Heart left ventricle (tissue), 16 donors: ENCODE measurements at regions of chr12 and their contacts with region 1.

Region 1: DNA sequence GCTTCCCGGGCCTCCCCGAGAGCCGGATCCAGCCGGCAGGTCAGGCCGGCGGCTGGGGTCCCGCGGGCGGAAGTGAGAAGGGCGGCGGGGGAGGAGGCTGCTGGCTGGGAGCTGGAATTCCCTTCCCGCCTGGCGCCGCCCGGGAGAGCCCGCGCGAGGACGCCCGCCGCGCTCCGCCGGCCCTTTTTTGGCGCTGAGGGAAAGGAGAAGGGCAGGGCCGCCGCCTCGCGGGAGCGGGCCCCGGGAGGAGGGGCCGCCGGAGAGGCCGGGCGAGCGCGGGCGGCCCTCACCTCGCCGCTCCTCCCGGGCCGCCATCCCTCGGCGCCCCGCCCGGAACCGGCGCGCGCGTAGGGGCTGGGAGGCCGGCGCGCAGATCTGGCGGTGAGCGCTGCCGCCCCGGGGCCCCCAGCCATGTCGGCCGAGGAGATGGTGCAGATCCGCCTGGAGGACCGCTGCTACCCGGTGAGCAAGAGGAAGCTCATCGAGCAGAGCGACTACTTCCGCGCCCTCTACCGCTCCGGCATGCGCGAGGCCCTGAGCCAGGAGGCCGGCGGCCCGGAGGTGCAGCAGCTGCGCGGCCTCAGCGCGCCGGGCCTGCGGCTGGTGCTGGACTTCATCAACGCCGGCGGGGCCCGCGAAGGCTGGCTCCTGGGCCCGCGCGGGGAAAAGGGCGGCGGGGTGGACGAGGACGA is at the starts of genes KLHL42 and MANSC4:
- DNase-seq: peak; percentile 79 to 89 (median 84)
- ATAC-seq: peak; percentile 70 to 96 (median 91)
- H3K4me3 ChIP-seq: peak within 1 kb of the TSS; percentile 72 to 94 (median 84)
- H3K27ac ChIP-seq: peak within 1 kb of the TSS; percentile 75 to 93 (median 88)
- H3K4me1 ChIP-seq: peaks cover 0 to 35% (median 21%) of the 10 kb centered on the region in 12 donors
- H3K27me3 ChIP-seq: no peaks in the 10 kb centered on the region
- CTCF ChIP-seq: peak in 3 of 12 donors; percentile 8 to 21 (median 21)
- POLR2A ChIP-seq: peak in 1 of 2 donors; percentile 30
- total RNA-seq, gene KLHL42: 5.0 to 11.4 (median 6.5) TPM
- total RNA-seq, gene MANSC4: not detected

Region 2: GRCh38 chr12:27710592-27711316 is 69.3 kb before region 1 on chr12 and contains the start of gene MRPS35:
- intact Hi-C with region 1: loop called in 1 of 10 experiments (anchors 5 kb)
- DNase-seq: peak; percentile 94 to 96 (median 94)
- ATAC-seq: peak; percentile 98 to 99 (median 98)
- H3K4me3 ChIP-seq: peak within 1 kb of the TSS; percentile 56 to 99 (median 84)
- H3K27ac ChIP-seq: peak within 1 kb of the TSS; percentile 6 to 92 (median 82)
- H3K4me1 ChIP-seq: peaks cover 0 to 27% (median 15%) of the 10 kb centered on the region in 12 donors
- H3K27me3 ChIP-seq: no peaks in the 10 kb centered on the region
- CTCF ChIP-seq: peak in 1 of 12 donors; percentile 2
- POLR2A ChIP-seq: peak in 1 of 2 donors; percentile 68
- total RNA-seq, gene MRPS35: 45.7 to 94.1 (median 59.6) TPM

Region 3: GRCh38 chr12:27723212-27723611 is 56.9 kb before region 1 on chr12:
- intact Hi-C with region 1: loop called in 1 of 10 experiments (anchors 10 kb)
- DNase-seq: no peak
- ATAC-seq: no peak
- H3K4me3 ChIP-seq: no peak overlapping the region
- H3K27ac ChIP-seq: no peak overlapping the region
- H3K4me1 ChIP-seq: no peaks in the 10 kb centered on the region
- H3K27me3 ChIP-seq: no peaks in the 10 kb centered on the region
- CTCF ChIP-seq: no peak
- POLR2A ChIP-seq: no peak

Region 4: GRCh38 chr12:27797301-27798025 is 17.4 kb after region 1 on chr12:
- intact Hi-C with region 1: loop called in 1 of 10 experiments (anchors 1 kb)
- DNase-seq: no peak
- ATAC-seq: no peak
- H3K4me3 ChIP-seq: no peak overlapping the region
- H3K27ac ChIP-seq: no peak overlapping the region
- H3K4me1 ChIP-seq: no peaks in the 10 kb centered on the region
- H3K27me3 ChIP-seq: no peaks in the 10 kb centered on the region
- CTCF ChIP-seq: no peak
- POLR2A ChIP-seq: no peak